Activated B cell treated with CpG ODN at 0.5 μM for 24 hours (primary cell): ENCODE measurements at regions of chr2 and their contacts with region 1.

Region 1: DNA sequence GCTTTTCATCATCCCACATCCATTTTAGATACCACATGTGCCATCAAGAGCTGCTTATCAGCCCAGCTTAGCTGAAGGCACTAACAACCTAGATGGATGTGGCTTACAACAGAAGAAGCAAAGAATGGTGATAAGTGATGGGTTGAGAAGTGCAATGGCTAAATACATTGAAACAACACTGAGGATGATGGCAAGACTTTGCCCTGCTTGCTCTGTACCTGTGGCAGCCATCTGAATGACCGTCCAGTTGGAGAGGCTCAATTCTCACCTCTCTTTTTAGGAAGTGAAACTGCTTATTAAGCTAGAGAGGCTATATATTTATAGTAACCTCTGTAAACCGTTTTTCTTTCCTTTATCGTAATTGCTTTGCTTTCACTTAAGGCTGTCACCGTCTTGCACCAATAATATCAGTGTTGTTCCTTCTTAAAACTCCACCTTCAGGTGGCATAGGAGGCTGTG is 5.7 kb downstream of the GPATCH11 start:
- DNase-seq: no peak
- ATAC-seq: peak; percentile 82
- H3K4me3 Mint-ChIP-seq: peak overlapping the region; percentile 29
- H3K27ac Mint-ChIP-seq: peak overlapping the region; percentile 90
- H3K4me1 Mint-ChIP-seq: peaks cover 62% of the 10 kb centered on the region
- H3K27me3 Mint-ChIP-seq: no peaks in the 10 kb centered on the region
- CTCF ChIP-seq: no peak

Region 2: GRCh38 chr2:37013315-37013641 is 76.8 kb before region 1 on chr2:
- CTCF ChIA-PET with region 1: no interaction called
- POLR2A ChIA-PET with region 1: interaction called, 5 read pairs
- intact Hi-C with region 1: loop called (anchors 2 kb)
- DNase-seq: no peak
- ATAC-seq: peak; percentile 31
- H3K4me3 Mint-ChIP-seq: no peak overlapping the region
- H3K27ac Mint-ChIP-seq: peak overlapping the region; percentile 80
- H3K4me1 Mint-ChIP-seq: peaks cover 44% of the 10 kb centered on the region
- H3K27me3 Mint-ChIP-seq: no peaks in the 10 kb centered on the region
- CTCF ChIP-seq: no peak

Region 3: GRCh38 chr2:37068686-37069085 is 21.4 kb before region 1 on chr2:
- CTCF ChIA-PET with region 1: no interaction called
- POLR2A ChIA-PET with region 1: no interaction called
- intact Hi-C with region 1: no loop called
- DNase-seq: no peak
- ATAC-seq: no peak
- H3K4me3 Mint-ChIP-seq: no peak overlapping the region
- H3K27ac Mint-ChIP-seq: no peak overlapping the region
- H3K4me1 Mint-ChIP-seq: peaks cover 15% of the 10 kb centered on the region
- H3K27me3 Mint-ChIP-seq: no peaks in the 10 kb centered on the region
- CTCF ChIP-seq: no peak

Region 4: GRCh38 chr2:37244017-37244416 is 154.0 kb after region 1 on chr2:
- CTCF ChIA-PET with region 1: no interaction called
- POLR2A ChIA-PET with region 1: no interaction called
- intact Hi-C with region 1: no loop called
- DNase-seq: no peak
- ATAC-seq: no peak
- H3K4me3 Mint-ChIP-seq: no peak overlapping the region
- H3K27ac Mint-ChIP-seq: peak overlapping the region; percentile 41
- H3K4me1 Mint-ChIP-seq: no peaks in the 10 kb centered on the region
- H3K27me3 Mint-ChIP-seq: no peaks in the 10 kb centered on the region
- CTCF ChIP-seq: no peak